Sigmoid colon (tissue), 7 donors: ENCODE measurements at regions of chr19 and their contacts with region 1.

Region 1: DNA sequence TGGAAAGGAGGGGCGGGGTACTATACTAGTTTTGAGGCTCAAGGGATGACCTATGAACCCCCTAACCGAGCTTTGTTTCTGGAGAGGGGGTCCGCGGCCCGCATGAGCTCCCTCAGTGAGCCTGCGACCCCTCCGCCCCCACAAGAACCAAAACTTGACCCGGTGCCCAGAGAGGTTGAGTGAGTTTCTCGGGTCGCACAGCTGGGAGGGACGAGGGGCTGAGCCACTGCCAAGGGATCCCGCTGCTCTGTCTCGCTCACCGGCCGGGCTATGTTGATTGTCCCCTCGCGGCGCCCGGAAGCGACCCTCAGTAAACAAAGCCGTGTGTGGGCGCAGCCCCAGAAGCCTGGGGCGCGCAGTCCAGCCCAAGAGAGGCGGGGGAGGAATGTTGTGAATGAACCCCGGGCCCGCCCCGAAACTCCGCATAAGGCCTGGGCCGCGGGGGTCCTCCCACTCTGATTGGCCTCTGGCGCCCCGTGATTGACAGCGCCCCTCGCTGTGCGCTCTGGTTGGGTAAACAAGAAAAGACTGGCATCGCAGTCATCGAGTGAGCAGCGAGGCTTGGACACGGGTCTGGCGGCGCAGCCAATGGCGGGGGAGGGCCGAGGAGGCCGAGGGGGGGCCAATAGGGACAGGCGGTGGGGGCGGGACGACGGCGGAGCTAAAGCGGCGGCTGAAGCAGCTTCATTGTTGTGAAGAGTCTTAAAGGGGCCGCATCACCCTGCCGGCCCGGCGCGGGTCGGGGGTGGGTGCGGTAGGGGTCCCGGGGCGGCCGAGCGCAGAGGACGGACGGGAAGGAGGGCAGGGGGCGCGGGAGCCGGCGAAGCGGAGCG is at the start of gene ZSWIM4:
- DNase-seq: peak; percentile 100
- H3K4me3 ChIP-seq: peak within 1 kb of the TSS; percentile 61 to 96 (median 70)
- H3K27ac ChIP-seq: peak within 1 kb of the TSS; percentile 93 to 97 (median 94)
- H3K4me1 ChIP-seq: peaks cover 0 to 36% (median 33%) of the 10 kb centered on the region in 4 donors
- H3K27me3 ChIP-seq: no peaks in the 10 kb centered on the region
- CTCF ChIP-seq: no peak
- EP300 ChIP-seq: no peak
- POLR2A ChIP-seq: peak; percentile 12 to 37
- total RNA-seq, gene ZSWIM4: 2.3 to 4.4 (median 3.3) TPM

Region 2: DNA sequence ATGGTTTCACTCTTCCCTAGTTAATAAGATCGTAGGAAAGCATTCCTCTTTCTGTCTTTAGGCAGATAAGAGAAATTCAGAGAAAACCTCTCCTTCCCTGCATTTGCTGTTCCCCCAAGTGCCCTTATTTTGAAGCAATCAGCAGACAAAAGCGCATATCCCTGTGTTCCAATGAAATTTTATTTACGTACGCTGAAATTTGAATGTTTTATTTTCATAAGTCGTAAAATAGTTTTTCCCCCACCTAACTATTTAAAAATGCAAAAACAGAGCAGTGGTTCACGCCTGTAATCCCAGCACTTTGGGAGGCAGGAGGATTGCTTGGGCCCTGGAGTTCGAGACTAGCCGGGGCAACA is 47.9 kb before region 1 on chr19:
- intact Hi-C with region 1: loop called (anchors 1 kb)
- DNase-seq: no peak
- H3K4me3 ChIP-seq: peak overlapping the region; percentile 72 to 93 (median 87)
- H3K27ac ChIP-seq: peak overlapping the region; percentile 87 to 92 (median 90)
- H3K4me1 ChIP-seq: peaks cover 0 to 17% (median 13%) of the 10 kb centered on the region in 4 donors
- H3K27me3 ChIP-seq: no peaks in the 10 kb centered on the region
- CTCF ChIP-seq: no peak
- EP300 ChIP-seq: no peak
- POLR2A ChIP-seq: no peak

Region 3: GRCh38 chr19:13839130-13839937 is 44.4 kb after region 1 on chr19:
- intact Hi-C with region 1: loop called (anchors 5 kb)
- DNase-seq: peak; percentile 95
- H3K4me3 ChIP-seq: peak overlapping the region; percentile 77 to 99 (median 88)
- H3K27ac ChIP-seq: peak overlapping the region; percentile 96 to 100 (median 99)
- H3K4me1 ChIP-seq: peaks cover 0 to 87% (median 80%) of the 10 kb centered on the region in 4 donors
- H3K27me3 ChIP-seq: no peaks in the 10 kb centered on the region
- CTCF ChIP-seq: no peak
- EP300 ChIP-seq: peak in 2 of 4 donors; percentile 35 to 36
- POLR2A ChIP-seq: peak; percentile 26 to 45

Region 4: DNA sequence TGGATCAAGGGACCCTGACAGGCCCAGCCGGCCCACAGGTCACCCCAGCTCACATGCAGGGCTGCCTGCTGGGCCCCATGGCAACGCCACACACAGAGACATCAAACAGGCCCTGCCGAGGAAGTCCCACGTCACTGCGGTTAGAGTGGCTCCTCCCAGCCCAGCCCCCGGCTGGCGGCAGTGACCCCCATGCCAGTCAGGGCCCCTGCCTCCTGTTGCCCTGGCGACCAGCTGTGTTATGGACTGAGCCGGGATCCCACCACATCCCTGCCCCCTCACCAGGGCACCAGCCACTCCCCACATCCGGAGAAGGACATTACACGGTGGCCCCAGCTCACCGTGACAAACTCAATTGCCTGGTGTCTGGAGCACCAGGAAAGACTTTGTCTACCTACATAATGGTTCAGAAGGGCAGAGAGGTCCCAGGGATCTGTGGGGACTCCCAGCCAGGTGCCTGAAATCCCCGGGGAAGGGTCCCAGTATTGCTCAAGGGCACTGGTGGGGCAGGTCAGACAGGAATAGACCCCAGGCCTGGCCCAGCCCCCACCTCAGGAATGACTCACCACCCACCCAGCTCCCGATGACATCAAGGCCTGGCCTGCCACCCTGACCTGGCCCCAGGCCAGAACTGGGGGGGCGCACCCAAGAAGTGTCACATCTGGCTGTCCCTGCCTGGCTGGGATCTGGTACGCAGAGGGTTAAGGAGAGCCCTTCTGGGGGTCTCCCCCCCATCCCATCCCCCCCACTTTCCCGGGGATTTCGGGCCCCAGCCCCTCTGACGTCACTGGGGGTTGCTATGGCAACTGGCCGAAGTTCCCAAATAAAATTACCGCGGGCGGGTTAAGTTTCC is 51.8 kb after region 1 on chr19:
- intact Hi-C with region 1: loop called (anchors 2 kb)
- DNase-seq: peak; percentile 95
- H3K4me3 ChIP-seq: peak overlapping the region; percentile 47 to 60 (median 54)
- H3K27ac ChIP-seq: peak overlapping the region; percentile 96 to 100 (median 99)
- H3K4me1 ChIP-seq: peaks cover 0 to 75% (median 64%) of the 10 kb centered on the region in 4 donors
- H3K27me3 ChIP-seq: no peaks in the 10 kb centered on the region
- CTCF ChIP-seq: no peak
- EP300 ChIP-seq: peak; percentile 5 to 80 (median 55)
- POLR2A ChIP-seq: no peak

Region 5: DNA sequence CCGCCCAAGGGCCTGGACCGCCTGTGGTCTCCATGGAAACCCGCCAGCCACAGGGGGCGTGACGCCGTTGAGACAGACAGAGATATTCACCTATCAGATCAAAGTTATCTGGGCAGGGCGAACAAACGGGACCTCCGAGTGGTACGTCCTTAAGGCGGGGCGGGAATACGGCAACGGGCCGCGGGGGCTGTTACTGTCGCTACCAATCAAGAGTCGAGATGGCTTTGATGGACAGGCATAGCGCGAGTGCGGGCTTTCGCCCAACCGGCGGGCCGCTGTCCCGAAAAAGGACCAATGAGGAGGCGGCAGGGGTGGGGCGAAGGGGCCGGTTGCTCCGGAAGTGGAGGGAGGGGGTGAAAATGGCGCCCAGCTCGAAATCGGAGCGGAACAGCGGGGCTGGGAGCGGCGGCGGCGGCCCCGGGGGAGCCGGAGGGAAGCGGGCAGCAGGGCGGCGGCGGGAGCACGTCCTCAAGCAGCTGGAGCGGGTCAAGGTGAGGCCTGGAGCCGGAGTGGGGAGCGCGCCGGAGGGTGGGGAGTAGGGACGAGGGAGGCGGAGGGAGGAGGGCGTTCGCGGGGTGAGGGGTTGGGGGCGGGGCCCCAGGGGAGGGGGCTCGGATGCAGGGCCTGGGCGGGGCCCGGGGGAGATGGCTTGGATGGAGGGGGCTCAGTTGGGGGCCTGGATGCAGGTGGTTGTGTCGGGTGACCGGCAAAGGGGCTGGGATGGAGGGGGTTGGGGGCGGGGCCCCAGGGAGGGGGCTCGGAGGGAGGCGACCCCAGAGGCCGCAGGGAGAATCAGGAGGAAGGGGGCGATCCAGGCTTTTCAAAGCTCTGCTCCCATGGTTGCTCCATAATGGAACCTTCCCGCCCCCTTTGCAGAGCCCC is 157.4 kb after region 1 on chr19 and contains the start of gene DCAF15:
- intact Hi-C with region 1: loop called (anchors 5 kb)
- DNase-seq: peak; percentile 100
- H3K4me3 ChIP-seq: peak within 1 kb of the TSS; percentile 89 to 96 (median 92)
- H3K27ac ChIP-seq: peak within 1 kb of the TSS; percentile 84 to 88 (median 88)
- H3K4me1 ChIP-seq: peaks cover 0 to 21% (median 15%) of the 10 kb centered on the region in 4 donors
- H3K27me3 ChIP-seq: no peaks in the 10 kb centered on the region
- CTCF ChIP-seq: no peak
- EP300 ChIP-seq: no peak
- POLR2A ChIP-seq: peak in 1 of 2 donors; percentile 23
- total RNA-seq, gene DCAF15: 7.9 to 14.6 (median 12.1) TPM

Region 6: GRCh38 chr19:14006243-14006765 is 211.3 kb after region 1 on chr19 and contains the start of gene RFX1:
- intact Hi-C with region 1: loop called (anchors 10 kb)
- DNase-seq: peak; percentile 100
- H3K4me3 ChIP-seq: peak within 1 kb of the TSS; percentile 73 to 97 (median 96)
- H3K27ac ChIP-seq: peak within 1 kb of the TSS; percentile 98 to 100 (median 99)
- H3K4me1 ChIP-seq: peaks cover 0 to 30% (median 24%) of the 10 kb centered on the region in 4 donors
- H3K27me3 ChIP-seq: no peaks in the 10 kb centered on the region
- CTCF ChIP-seq: no peak
- EP300 ChIP-seq: peak in 1 of 4 donors; percentile 46
- POLR2A ChIP-seq: no peak
- total RNA-seq, gene RFX1: 1.6 to 5.0 (median 1.9) TPM

Region 7: GRCh38 chr19:14081325-14082093 is 286.5 kb after region 1 on chr19:
- intact Hi-C with region 1: loop called (anchors 10 kb)
- DNase-seq: peak; percentile 100
- H3K4me3 ChIP-seq: peak overlapping the region; percentile 64 to 88 (median 76)
- H3K27ac ChIP-seq: peak overlapping the region; percentile 86 to 95 (median 90)
- H3K4me1 ChIP-seq: peaks cover 0 to 22% (median 19%) of the 10 kb centered on the region in 4 donors
- H3K27me3 ChIP-seq: no peaks in the 10 kb centered on the region
- CTCF ChIP-seq: peak in 1 of 4 experiments; percentile 14
- EP300 ChIP-seq: no peak
- POLR2A ChIP-seq: peak in 1 of 2 donors; percentile 74